ENCODE measurements at regions of chr3 and their contacts with region 1.

Region 1: GRCh38 chr3:51434746-51435327 is 43.8 kb downstream of the RBM15B start:
- DNase-seq: peak; percentile 57
- CTCF ChIP-seq: peak; percentile 55

Region 2: DNA sequence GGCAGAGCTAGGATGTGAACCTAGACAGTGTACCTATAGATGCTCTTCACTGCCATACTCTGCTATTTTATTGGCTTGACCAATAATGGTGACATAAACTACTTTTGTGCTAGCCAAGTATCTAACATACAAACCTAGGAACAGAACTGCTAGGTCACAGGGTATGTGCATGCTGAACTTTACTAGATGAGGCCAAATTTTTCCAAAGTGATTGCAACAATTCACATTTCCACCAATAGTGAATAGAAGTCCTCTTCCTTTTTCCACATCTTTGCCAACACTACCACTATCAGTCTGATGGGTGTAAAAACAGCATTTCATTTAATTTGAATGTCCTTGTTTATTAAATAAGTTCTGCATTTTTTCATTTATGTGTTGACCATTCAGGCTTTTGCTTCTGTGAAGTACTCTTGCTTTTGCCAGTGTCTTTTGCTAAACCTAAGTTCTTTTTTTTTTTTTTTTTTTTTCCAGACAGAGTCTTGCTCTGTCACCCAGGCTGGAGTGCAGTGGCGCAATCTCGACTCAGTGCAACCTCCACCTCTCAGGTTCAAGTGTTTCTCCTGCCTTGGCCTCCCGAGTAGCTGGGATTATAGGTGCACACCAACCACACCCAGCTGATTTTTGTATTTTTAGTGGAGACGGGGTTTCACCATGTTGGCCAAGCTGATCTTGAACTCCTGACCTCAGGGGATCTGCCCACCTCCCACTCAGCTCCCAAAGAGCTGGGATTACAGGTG is 10.9 kb after region 1 on chr3:
- CTCF ChIA-PET with region 1: interaction called, 13 read pairs
- POLR2A ChIA-PET with region 1: interaction called, 3 read pairs
- DNase-seq: no peak
- CTCF ChIP-seq: no peak

Measured in GM10248 (cell line).